ENCODE measurements at regions of chr12 and their contacts with region 1.

Region 1: DNA sequence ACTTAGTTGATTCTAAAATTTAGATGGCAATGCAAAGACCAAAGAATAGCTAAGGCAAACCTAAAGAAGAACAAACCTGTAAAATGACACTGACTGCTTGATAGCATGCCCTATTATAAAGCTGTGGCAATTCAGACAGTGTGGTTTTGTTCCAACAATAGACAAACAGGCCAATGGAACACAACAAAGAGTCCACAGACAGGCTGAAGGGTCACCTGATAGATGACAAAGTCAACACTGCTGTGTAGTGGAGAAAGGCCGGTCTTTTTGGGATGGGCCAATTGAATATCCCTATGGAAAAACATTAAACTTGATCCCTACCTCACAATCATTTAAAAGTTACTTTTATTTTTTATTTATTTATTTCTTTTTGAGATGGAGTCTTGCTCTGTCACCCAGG is 33.8 kb upstream of the SLC25A3 start:
- DNase-seq: no peak
- H3K4me3 ChIP-seq: no peak overlapping the region
- H3K27ac ChIP-seq: no peak overlapping the region
- H3K4me1 ChIP-seq: no peaks in the 10 kb centered on the region
- H3K27me3 ChIP-seq: no peaks in the 10 kb centered on the region
- CTCF ChIP-seq: no peak
- POLR2A ChIP-seq: no peak

Region 2: DNA sequence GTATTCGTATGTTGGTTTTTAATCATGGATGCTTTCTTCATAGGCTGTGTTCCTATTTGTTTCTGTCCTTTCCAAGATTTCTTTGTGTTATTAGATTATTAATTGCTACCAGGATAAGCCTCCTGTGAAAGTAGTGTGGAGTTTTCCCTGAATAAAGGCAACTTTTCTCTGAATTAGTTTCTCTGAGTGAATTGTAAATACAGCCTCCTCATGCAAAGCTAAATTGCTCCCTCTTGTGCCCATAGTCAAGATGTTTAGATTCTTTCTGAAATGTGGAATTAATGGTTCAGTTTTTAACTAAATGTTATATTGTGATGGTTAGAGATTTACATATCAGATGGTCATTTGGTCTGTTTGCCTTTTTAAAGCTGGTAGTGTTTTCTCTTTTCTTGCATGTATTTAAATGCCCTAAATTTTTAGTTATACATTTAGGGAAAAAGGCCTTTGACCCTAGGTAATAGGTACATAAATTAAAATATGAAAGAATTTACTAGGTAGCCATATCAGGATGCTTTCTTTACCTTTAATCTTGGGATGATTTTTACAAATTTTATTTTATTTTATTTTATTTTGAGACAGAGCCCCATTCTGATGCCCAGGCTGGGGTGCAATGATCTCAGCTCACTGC is 94.3 kb after region 1 on chr12:
- intact Hi-C with region 1: loop called (anchors 10 kb)
- DNase-seq: no peak
- H3K4me3 ChIP-seq: no peak overlapping the region
- H3K27ac ChIP-seq: no peak overlapping the region
- H3K4me1 ChIP-seq: no peaks in the 10 kb centered on the region
- H3K27me3 ChIP-seq: no peaks in the 10 kb centered on the region
- CTCF ChIP-seq: peak; percentile 11 to 45 (median 33)
- POLR2A ChIP-seq: no peak

Measured in vagina (tissue), 2 donors.